Esophagus muscularis mucosa (tissue), 4 donors: ENCODE measurements at regions of chr12 and their contacts with region 1.

Region 1: DNA sequence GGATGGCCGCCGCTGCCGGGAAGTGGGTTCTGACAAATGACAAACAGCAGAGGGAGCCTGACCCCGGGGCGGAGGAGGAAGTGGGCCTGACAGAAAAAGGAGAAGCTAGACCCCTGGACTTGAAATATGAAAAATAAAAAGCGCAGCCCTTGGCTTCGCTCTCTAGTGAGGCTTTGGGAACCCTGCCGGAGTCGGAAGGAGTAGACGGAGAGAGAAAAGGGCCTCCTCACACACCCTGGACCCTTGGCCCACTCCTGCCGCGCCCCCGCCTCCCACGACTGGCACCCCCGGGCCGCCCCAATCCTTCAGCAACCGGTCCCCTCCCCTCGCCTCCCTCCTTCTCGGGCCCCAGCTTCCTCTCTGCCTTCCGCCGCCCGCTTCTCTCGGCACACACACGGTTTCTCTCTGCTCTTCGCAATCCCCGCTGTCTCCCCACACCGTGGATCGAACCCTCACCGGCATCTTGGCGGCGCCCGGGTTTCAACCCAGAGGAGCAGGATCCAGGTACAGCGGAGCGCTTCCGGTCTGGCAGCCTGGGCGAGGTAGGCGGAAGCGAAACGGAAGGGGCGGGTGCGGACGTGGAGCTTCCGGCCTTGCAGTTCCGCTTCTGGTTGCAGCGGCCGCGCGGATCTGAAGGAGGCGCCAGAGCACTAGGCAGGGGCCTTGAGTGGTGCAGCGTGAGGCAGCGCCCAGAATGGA is at the start of gene ARPC3:
- DNase-seq: peak; percentile 98
- H3K4me3 ChIP-seq: peak within 1 kb of the TSS; percentile 61 to 94 (median 85)
- H3K27ac ChIP-seq: peak within 1 kb of the TSS; percentile 80 to 98 (median 88)
- H3K4me1 ChIP-seq: peaks cover 16 to 36% (median 29%) of the 10 kb centered on the region in 4 donors
- H3K27me3 ChIP-seq: no peaks in the 10 kb centered on the region
- CTCF ChIP-seq: peak; percentile 80 to 95 (median 91)
- EP300 ChIP-seq: no peak
- POLR2A ChIP-seq: no peak
- total RNA-seq, gene ARPC3: 227 to 363 (median 257) TPM

Region 2: DNA sequence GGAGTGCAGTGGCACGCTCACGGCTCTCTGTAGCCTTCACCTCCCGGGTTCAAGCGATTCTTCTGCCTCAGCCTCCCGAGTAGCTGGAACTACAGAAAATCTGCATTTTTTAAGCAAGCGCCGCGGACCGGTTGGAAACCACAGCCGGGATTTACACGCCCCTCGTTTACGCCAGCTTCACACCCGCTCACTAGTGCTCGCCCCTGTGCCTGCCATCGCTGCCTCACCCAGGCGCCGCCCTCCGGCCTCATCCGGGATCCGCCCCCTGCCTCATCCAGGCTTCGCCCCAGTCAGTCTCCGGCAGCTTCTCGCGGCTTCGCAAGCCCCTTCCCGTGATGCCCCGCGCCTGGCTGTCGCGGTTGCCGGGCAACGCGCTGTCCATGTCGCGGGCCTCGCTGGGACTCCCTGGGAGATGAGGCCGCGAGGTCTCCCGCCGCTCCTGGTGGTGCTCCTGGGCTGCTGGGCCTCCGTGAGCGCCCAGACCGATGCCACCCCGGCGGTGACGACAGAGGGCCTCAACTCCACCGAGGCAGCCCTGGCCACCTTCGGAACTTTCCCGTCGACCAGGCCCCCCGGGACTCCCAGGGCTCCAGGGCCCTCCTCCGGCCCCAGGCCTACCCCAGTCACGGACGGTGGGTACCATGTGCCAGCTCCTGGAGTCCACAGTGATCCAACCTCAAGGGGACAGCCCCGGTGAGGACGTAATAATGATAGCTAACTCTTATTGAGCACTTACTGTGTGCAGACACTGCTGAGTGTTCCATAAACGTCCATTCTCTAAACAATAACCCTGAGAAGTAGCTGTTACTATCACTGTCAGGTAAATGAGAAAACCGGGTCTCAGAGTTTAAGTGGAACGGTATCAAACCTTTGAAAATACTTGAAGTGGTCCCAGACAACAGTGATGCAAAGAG is 164.1 kb after region 1 on chr12 and contains the start of gene TCTN1:
- intact Hi-C with region 1: loop called (anchors 5 kb)
- DNase-seq: peak; percentile 98
- H3K4me3 ChIP-seq: peak within 1 kb of the TSS; percentile 72 to 84 (median 78)
- H3K27ac ChIP-seq: peak within 1 kb of the TSS; percentile 76 to 78 (median 76)
- H3K4me1 ChIP-seq: peaks cover 10 to 24% (median 19%) of the 10 kb centered on the region in 4 donors
- H3K27me3 ChIP-seq: no peaks in the 10 kb centered on the region
- CTCF ChIP-seq: peak in 2 of 3 experiments; percentile 22
- EP300 ChIP-seq: no peak
- POLR2A ChIP-seq: no peak
- total RNA-seq, gene TCTN1: 17.4 to 26.2 (median 21.4) TPM

Region 3: GRCh38 chr12:110698171-110698902 is 248.4 kb after region 1 on chr12:
- intact Hi-C with region 1: loop called (anchors 10 kb)
- DNase-seq: no peak
- H3K4me3 ChIP-seq: peak overlapping the region; percentile 10 to 47 (median 26)
- H3K27ac ChIP-seq: peak overlapping the region in 2 of 4 donors; percentile 38 to 39
- H3K4me1 ChIP-seq: peaks cover 16 to 23% (median 18%) of the 10 kb centered on the region in 4 donors
- H3K27me3 ChIP-seq: no peaks in the 10 kb centered on the region
- CTCF ChIP-seq: peak; percentile 55 to 74 (median 70)
- EP300 ChIP-seq: no peak
- POLR2A ChIP-seq: no peak

Region 4: DNA sequence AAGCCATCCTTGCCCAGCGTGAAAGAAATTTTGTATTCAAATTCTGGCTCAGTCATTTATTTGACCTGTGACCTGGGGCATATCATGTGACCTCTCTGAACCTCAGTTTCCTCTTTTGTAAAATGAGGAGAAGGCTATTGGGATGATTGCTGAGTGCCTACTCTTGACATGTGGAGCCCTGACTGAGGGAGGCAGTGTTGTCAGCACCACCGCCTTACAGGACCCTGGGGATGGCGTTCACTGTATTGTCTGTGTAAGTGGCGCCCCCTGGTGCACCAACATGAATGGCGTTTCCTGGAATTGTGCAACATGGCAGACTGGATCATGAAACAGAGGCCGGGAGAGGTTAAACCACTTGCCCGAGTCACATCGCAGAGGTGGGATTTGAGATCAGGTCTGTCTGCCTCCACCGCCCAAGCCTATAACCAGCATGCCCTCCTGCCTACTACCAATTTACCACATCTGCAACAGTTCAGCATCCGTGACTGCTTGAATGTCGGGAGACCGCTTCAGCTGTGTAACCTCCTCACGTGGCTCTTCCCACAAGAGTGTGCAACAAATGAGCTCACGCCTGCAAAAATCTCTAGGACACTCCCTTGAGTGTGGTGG is 376.7 kb after region 1 on chr12:
- intact Hi-C with region 1: loop called (anchors 10 kb)
- DNase-seq: peak; percentile 97
- H3K4me3 ChIP-seq: peak overlapping the region in 1 of 4 donors; percentile 21
- H3K27ac ChIP-seq: no peak overlapping the region
- H3K4me1 ChIP-seq: peaks cover 0 to 8% (median 4%) of the 10 kb centered on the region in 4 donors
- H3K27me3 ChIP-seq: no peaks in the 10 kb centered on the region
- CTCF ChIP-seq: peak; percentile 62 to 81 (median 75)
- EP300 ChIP-seq: no peak
- POLR2A ChIP-seq: no peak

Region 5: DNA sequence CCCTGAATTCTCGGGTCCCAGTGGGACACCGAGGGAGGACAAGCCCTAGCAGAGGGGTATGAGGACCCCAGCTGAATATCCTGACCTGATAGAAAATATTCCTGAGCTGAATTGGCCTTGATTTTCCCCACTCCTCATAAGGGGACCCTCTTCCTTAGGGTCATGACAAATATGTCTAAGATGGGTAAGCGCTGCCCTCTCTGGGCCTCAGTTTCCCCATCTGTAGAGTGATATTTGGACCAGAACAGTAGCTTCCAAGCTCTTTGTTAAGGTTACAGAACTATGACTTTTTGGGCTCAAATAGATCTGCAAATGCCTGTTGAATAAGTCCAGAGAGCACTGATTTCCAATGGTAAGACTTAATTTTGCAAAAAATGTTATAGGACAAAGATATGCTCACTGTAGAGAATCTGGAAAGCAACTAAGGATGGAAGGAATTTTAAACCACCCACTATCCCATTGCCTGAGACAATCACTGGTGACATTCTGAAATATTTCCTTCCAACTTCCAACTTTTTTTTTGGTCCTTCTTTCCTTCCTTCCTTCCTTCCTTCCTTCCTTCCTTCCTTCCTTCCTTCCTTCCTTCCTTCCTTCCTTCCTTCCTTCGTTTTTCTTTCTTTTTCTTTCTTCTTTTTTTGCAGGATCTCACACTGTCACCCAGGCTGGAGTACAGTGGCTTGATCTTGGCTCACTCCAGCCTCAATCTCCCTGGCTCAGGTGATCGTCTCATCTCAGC is 438.5 kb after region 1 on chr12:
- intact Hi-C with region 1: loop called (anchors 10 kb)
- DNase-seq: no peak
- H3K4me3 ChIP-seq: peak overlapping the region; percentile 51 to 63 (median 56)
- H3K27ac ChIP-seq: peak overlapping the region in 3 of 4 donors; percentile 67 to 75 (median 70)
- H3K4me1 ChIP-seq: peaks cover 3 to 12% (median 6%) of the 10 kb centered on the region in 4 donors
- H3K27me3 ChIP-seq: peaks cover 0 to 6% (median 0%) of the 10 kb centered on the region in 4 donors
- CTCF ChIP-seq: no peak
- EP300 ChIP-seq: no peak
- POLR2A ChIP-seq: no peak